MCF 10A (cell line): ENCODE measurements at regions of chr12 and their contacts with region 1.

Region 1: DNA sequence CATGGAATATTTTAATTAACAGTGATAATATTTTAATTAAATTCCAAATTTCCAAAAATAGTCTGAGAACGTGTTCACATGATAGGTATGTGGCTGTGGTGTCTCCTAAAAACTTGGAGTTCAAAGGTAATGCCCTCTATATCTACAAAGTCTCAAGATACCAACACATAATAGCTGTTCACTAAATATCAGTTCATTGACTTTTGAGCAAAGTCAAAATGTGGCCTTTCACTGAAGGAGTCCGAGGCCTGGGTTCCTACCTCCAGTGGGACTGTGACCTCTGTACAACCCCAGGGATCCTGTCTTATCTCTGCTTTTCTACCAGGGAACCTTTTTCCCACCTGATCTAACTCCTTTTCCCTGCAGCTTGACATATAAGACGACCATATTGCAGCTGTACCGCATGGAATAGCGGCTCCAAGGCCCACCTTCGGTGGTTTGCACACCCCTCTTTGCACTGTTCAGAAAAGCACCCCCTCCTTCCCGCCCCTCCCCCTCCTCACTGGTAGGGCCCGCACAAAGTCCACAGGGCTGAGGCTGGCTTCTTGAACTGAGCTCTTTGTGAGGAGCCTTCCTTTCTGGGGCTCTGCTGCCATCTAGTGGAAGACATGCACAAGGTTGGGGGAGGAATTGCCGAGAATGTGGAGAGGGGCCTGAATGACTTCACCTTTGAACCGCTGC is 3.1 kb downstream of the CCND2 start:
- DNase-seq: peak; percentile 91
- H3K4me3 Mint-ChIP-seq: peak overlapping the region; percentile 79
- H3K27ac Mint-ChIP-seq: no peak overlapping the region
- H3K4me1 Mint-ChIP-seq: peaks cover 19% of the 10 kb centered on the region
- H3K27me3 Mint-ChIP-seq: peaks cover 41% of the 10 kb centered on the region
- CTCF ChIP-seq: peak; percentile 93

Region 2: DNA sequence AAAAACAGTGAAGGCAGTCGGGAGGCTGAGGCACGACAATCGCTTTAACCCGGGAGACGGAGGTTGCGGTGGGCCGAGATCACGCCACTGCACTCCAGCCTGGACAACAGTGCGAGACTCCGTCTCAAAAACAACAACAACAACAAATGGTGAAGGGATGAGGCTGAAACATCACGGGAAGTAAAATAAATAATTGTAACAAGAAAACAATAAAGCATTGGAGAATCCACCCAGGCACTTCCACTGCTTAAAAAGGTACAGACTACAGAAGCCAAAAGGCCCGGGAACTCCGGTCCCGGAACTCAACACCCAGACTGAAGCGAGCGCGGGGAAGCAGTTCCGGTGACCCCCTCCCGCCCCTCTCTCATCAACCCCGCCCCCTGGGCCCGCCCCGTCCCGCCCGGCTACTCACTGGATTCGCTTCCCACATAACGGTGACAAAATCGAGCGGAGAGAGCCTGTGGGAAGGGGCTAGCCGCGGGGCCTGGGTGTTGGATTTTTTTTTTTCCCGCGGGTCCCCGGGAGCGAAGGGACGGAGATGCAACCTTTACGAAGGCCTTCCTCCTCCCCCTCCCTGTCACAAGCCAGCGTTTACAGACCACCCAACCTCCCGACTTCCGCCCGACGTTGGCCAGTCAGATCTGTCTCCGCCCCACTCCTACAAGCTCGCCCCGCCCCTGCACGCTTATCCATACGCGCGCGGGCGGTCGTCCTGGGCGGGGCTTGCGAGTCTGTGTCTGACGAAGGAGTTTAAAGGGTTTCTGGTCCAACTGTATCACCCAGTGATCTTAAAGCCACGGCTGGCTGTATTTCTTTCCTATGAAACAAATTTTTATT is 403.6 kb before region 1 on chr12 and contains the start of gene PARP11:
- CTCF ChIA-PET with region 1: interaction called, 16 read pairs
- POLR2A ChIA-PET with region 1: interaction called, 4 read pairs
- intact Hi-C with region 1: no loop called
- DNase-seq: peak; percentile 95
- H3K4me3 Mint-ChIP-seq: peak within 1 kb of the TSS; percentile 97
- H3K27ac Mint-ChIP-seq: peak within 1 kb of the TSS; percentile 98
- H3K4me1 Mint-ChIP-seq: peaks cover 10% of the 10 kb centered on the region
- H3K27me3 Mint-ChIP-seq: peaks cover 9% of the 10 kb centered on the region
- CTCF ChIP-seq: no peak
- total RNA-seq, gene PARP11: 7.0 and 10.3 TPM in 2 replicates

Region 3: GRCh38 chr12:3988519-3989448 is 287.9 kb before region 1 on chr12:
- CTCF ChIA-PET with region 1: interaction called, 96 read pairs
- POLR2A ChIA-PET with region 1: no interaction called
- intact Hi-C with region 1: no loop called
- DNase-seq: no peak
- H3K4me3 Mint-ChIP-seq: no peak overlapping the region
- H3K27ac Mint-ChIP-seq: no peak overlapping the region
- H3K4me1 Mint-ChIP-seq: no peaks in the 10 kb centered on the region
- H3K27me3 Mint-ChIP-seq: peaks cover 34% of the 10 kb centered on the region
- CTCF ChIP-seq: no peak

Region 4: GRCh38 chr12:4037747-4038312 is 238.8 kb before region 1 on chr12:
- CTCF ChIA-PET with region 1: interaction called, 136 read pairs
- POLR2A ChIA-PET with region 1: interaction called, 7 read pairs
- intact Hi-C with region 1: loop called (anchors 1 kb)
- DNase-seq: peak; percentile 69
- H3K4me3 Mint-ChIP-seq: no peak overlapping the region
- H3K27ac Mint-ChIP-seq: no peak overlapping the region
- H3K4me1 Mint-ChIP-seq: peaks cover 22% of the 10 kb centered on the region
- H3K27me3 Mint-ChIP-seq: peaks cover 4% of the 10 kb centered on the region
- CTCF ChIP-seq: peak; percentile 71

Region 5: GRCh38 chr12:4287325-4288211 is 10.9 kb after region 1 on chr12:
- CTCF ChIA-PET with region 1: interaction called, 38 read pairs
- POLR2A ChIA-PET with region 1: no interaction called
- intact Hi-C with region 1: no loop called
- DNase-seq: no peak
- H3K4me3 Mint-ChIP-seq: no peak overlapping the region
- H3K27ac Mint-ChIP-seq: no peak overlapping the region
- H3K4me1 Mint-ChIP-seq: no peaks in the 10 kb centered on the region
- H3K27me3 Mint-ChIP-seq: no peaks in the 10 kb centered on the region
- CTCF ChIP-seq: no peak

Region 6: GRCh38 chr12:4320853-4321701 is 44.4 kb after region 1 on chr12 and contains the start of gene TIGAR:
- CTCF ChIA-PET with region 1: interaction called, 4 read pairs
- POLR2A ChIA-PET with region 1: no interaction called
- intact Hi-C with region 1: loop called (anchors 1 kb)
- DNase-seq: peak; percentile 94
- H3K4me3 Mint-ChIP-seq: peak within 1 kb of the TSS; percentile 98
- H3K27ac Mint-ChIP-seq: peak within 1 kb of the TSS; percentile 84
- H3K4me1 Mint-ChIP-seq: peaks cover 19% of the 10 kb centered on the region
- H3K27me3 Mint-ChIP-seq: no peaks in the 10 kb centered on the region
- CTCF ChIP-seq: no peak
- total RNA-seq, gene TIGAR: 44.0 and 45.8 TPM in 2 replicates

Region 7: GRCh38 chr12:4423528-4424195 is 147.0 kb after region 1 on chr12:
- CTCF ChIA-PET with region 1: no interaction called
- POLR2A ChIA-PET with region 1: no interaction called
- intact Hi-C with region 1: no loop called
- DNase-seq: no peak
- H3K4me3 Mint-ChIP-seq: no peak overlapping the region
- H3K27ac Mint-ChIP-seq: no peak overlapping the region
- H3K4me1 Mint-ChIP-seq: peaks cover 5% of the 10 kb centered on the region
- H3K27me3 Mint-ChIP-seq: peaks cover 8% of the 10 kb centered on the region
- CTCF ChIP-seq: no peak